Psoas muscle (tissue), 8 donors: ENCODE measurements at regions of chr4 and their contacts with region 1.

Region 1: GRCh38 chr4:57020467-57021101 is 41.9 kb downstream of the POLR2B start:
- DNase-seq: no peak
- ATAC-seq: peak in 3 of 4 donors; percentile 30 to 50 (median 46)
- H3K4me3 ChIP-seq: no peak overlapping the region
- H3K27ac ChIP-seq: no peak overlapping the region
- H3K4me1 ChIP-seq: no peaks in the 10 kb centered on the region
- H3K27me3 ChIP-seq: no peaks in the 10 kb centered on the region
- CTCF ChIP-seq: no peak

Region 2: GRCh38 chr4:56475917-56476316 is 544.7 kb before region 1 on chr4:
- intact Hi-C with region 1: loop called (anchors 10 kb)
- DNase-seq: no peak
- ATAC-seq: no peak
- H3K4me3 ChIP-seq: no peak overlapping the region
- H3K27ac ChIP-seq: no peak overlapping the region
- H3K4me1 ChIP-seq: no peaks in the 10 kb centered on the region
- H3K27me3 ChIP-seq: no peaks in the 10 kb centered on the region
- CTCF ChIP-seq: no peak

Region 3: DNA sequence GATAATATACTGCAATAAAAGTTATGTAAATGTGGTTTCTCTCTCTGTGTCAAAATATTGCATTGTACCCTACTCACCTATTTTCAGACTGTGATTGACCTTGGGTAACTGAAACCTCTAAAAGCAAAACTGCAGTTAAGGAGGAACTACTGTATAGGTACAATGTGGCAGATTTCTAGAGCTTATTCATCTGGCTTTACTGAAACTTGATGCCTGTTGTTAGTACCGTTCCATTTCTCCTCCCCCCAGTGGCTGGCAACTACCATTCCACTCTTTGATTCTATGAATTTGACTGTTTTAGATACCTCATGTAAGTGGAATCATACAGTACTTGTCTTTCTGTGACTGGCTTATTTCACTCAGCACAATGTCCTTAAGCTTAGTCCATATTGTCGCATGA is 401.4 kb before region 1 on chr4:
- intact Hi-C with region 1: no loop called
- DNase-seq: no peak
- ATAC-seq: no peak
- H3K4me3 ChIP-seq: no peak overlapping the region
- H3K27ac ChIP-seq: no peak overlapping the region
- H3K4me1 ChIP-seq: peaks cover 6% of the 10 kb centered on the region
- H3K27me3 ChIP-seq: no peaks in the 10 kb centered on the region
- CTCF ChIP-seq: no peak

Region 4: DNA sequence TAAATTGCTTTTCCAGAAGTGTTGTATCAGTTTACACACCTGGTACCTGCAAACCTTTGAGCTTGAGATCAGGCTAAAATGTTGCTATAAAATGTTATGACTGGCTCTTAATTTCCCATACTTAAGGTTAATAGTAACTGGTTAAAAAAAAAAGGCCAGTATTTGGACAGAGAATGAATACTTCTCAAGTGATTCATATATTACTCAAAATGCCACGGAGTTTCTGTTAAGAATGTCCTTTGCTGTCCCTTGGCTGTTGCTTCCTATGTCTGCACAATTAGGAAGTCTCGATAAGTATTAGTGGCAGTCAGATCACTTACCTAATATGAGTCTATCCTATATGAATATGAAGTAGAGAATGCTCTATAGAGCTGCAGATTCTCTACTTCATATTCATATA is 321.8 kb after region 1 on chr4:
- intact Hi-C with region 1: no loop called
- DNase-seq: no peak
- ATAC-seq: no peak
- H3K4me3 ChIP-seq: no peak overlapping the region
- H3K27ac ChIP-seq: no peak overlapping the region
- H3K4me1 ChIP-seq: no peaks in the 10 kb centered on the region
- H3K27me3 ChIP-seq: no peaks in the 10 kb centered on the region
- CTCF ChIP-seq: no peak